Naive thymus-derived CD4-positive, alpha-beta T cell (primary cell): ENCODE measurements at regions of chr3 and their contacts with region 1.

Region 1: GRCh38 chr3:27484015-27484844 is at the start of gene SLC4A7:
- DNase-seq: peak; percentile 95 to 99 (median 97)
- ATAC-seq: peak; percentile 96
- H3K4me3 ChIP-seq: peak within 1 kb of the TSS; percentile 96
- H3K4me3 Mint-ChIP-seq: peak within 1 kb of the TSS; percentile 94 to 100 (median 99)
- H3K27ac ChIP-seq: peak within 1 kb of the TSS; percentile 90
- H3K27ac Mint-ChIP-seq: peak within 1 kb of the TSS; percentile 90 to 99 (median 95)
- H3K4me1 ChIP-seq: peaks cover 25 to 29% of the 10 kb centered on the region in 2 donors
- H3K4me1 Mint-ChIP-seq: peaks cover 35 to 42% (median 39%) of the 10 kb centered on the region in 7 donors
- H3K27me3 ChIP-seq: no peaks in the 10 kb centered on the region
- H3K27me3 Mint-ChIP-seq: no peaks in the 10 kb centered on the region
- total RNA-seq, gene SLC4A7: 34.9 to 69.1 (median 41.5) TPM

Region 2: DNA sequence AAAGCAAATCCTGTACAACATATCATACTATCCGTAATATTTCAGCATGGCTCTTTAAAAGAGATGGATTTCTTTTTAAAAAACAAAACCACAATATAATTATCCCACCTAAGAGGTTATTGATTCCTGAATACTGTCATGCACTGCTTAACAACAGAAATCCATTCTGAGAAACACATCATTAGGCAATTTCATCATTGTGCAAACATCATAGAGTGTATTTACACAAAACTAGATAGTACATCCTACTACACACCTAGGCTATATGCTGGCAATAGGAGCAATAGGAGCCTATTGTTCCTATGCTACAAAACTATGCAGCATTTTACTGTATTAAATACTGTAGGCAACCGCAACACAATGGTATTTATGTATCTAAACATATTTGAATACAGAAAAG is 357.0 kb before region 1 on chr3:
- CTCF ChIA-PET with region 1: no interaction called
- POLR2A ChIA-PET with region 1: no interaction called
- intact Hi-C with region 1: no loop called
- DNase-seq: no peak
- ATAC-seq: no peak
- H3K4me3 ChIP-seq: no peak overlapping the region
- H3K4me3 Mint-ChIP-seq: no peak overlapping the region
- H3K27ac ChIP-seq: no peak overlapping the region
- H3K27ac Mint-ChIP-seq: no peak overlapping the region
- H3K4me1 ChIP-seq: no peaks in the 10 kb centered on the region
- H3K4me1 Mint-ChIP-seq: no peaks in the 10 kb centered on the region
- H3K27me3 ChIP-seq: no peaks in the 10 kb centered on the region
- H3K27me3 Mint-ChIP-seq: peaks cover 0 to 5% (median 0%) of the 10 kb centered on the region in 5 donors

Region 3: DNA sequence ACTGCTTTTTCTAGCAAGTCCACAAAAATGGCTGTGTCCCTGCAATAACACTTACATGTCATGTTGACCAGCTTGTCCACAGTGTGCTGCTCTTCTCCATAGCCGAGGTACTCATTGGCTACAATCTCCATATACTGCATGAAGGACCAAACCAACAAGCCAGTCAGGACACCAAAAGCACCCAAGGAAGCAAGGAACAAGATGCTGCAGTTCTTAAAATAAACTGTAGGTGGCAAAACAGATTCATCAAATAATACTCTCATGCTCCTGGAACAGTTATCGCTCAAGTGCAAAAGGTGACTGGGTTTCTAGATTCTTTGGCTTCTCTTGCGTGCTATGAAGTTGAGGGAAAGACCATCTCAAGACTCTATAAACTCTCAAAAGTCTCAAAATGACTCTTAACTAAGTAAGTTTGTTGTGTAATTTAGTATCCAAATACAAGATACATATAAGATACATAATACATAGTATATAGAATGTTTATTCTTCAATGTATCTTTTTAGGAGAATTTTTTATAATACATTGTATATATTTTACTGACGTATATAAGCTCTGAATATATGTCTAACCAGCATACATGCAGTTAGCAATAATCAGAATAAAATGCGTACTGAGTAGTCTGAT is 172.1 kb before region 1 on chr3:
- CTCF ChIA-PET with region 1: interaction called, 4 read pairs
- POLR2A ChIA-PET with region 1: no interaction called
- intact Hi-C with region 1: loop called in 1 of 2 experiments (anchors 5 kb)
- DNase-seq: peak in 7 of 9 donors; percentile 18 to 61 (median 44)
- ATAC-seq: peak; percentile 70
- H3K4me3 ChIP-seq: no peak overlapping the region
- H3K4me3 Mint-ChIP-seq: no peak overlapping the region
- H3K27ac ChIP-seq: no peak overlapping the region
- H3K27ac Mint-ChIP-seq: no peak overlapping the region
- H3K4me1 ChIP-seq: no peaks in the 10 kb centered on the region
- H3K4me1 Mint-ChIP-seq: peaks cover 0 to 4% (median 0%) of the 10 kb centered on the region in 7 donors
- H3K27me3 ChIP-seq: no peaks in the 10 kb centered on the region
- H3K27me3 Mint-ChIP-seq: peaks cover 0 to 20% (median 8%) of the 10 kb centered on the region in 5 donors

Region 4: DNA sequence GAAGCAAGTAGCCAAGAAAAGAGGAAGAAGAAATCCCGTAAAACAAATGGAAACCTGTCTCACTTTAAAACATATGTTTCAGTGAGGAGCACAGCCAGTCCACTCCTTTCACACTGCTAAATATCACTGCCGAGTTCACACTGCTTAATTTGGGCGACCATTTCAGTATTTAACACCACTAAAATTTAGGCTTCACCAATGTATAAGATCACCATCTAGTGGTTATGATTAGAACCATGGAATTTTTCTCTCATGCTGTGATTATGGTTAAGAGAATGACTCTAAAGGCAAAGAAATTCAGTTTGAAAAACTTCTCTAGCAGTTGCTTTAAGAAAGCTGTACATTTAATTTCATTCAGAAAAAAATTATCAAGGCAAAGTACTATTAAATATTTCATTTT is 16.7 kb before region 1 on chr3:
- CTCF ChIA-PET with region 1: interaction called, 5 read pairs
- POLR2A ChIA-PET with region 1: interaction called, 6 read pairs
- intact Hi-C with region 1: loop called (anchors 1 kb)
- DNase-seq: peak in 7 of 9 donors; percentile 13 to 57 (median 38)
- ATAC-seq: peak; percentile 95
- H3K4me3 ChIP-seq: no peak overlapping the region
- H3K4me3 Mint-ChIP-seq: peak overlapping the region in 5 of 10 donors; percentile 4 to 42 (median 36)
- H3K27ac ChIP-seq: no peak overlapping the region
- H3K27ac Mint-ChIP-seq: peak overlapping the region in 5 of 9 donors; percentile 1 to 61 (median 26)
- H3K4me1 ChIP-seq: no peaks in the 10 kb centered on the region
- H3K4me1 Mint-ChIP-seq: peaks cover 6 to 38% (median 27%) of the 10 kb centered on the region in 7 donors
- H3K27me3 ChIP-seq: no peaks in the 10 kb centered on the region
- H3K27me3 Mint-ChIP-seq: no peaks in the 10 kb centered on the region

Region 5: DNA sequence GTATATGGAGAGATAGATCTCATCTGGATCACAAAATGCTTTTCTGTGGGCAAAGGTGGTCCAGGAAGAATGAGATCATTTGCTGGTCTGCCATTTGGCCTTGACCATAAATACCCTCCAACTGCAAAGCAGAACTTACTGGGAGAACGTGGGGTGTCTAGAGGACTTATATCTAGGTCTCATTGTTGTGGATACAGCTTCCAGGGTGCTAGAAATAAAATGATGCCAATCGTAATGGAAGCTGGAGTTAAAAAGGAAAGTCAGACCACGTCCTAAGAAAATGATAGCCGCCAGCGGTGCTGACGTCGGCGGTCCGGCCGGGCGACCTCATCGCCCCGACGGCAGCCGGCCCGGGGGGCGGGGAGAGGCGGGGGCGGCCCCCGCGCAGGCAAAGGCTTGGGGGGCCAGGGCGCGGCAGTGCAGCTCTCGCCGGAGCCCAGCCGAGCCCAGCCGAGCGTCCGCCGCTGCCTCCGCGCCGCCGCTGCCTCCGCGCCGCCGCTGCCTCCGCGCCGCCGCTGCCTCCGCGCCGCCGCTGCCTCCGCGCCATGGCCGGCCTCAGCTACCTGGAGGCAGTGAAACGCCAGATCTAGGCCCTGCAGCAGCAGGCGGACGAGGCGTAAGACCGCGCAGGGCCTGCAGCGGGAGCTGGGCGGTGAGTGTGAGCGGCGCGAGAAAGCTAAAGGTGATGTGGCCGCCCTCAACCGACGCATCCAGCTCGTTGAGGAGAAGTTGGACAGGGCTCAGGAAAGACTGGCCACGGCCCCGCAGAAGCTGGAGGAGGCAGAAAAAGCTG is 148.4 kb after region 1 on chr3:
- CTCF ChIA-PET with region 1: interaction called, 8 read pairs
- POLR2A ChIA-PET with region 1: interaction called, 8 read pairs
- intact Hi-C with region 1: loop called (anchors 1 to 2 kb)
- DNase-seq: peak; percentile 21 to 56 (median 44)
- ATAC-seq: peak; percentile 92
- H3K4me3 ChIP-seq: peak overlapping the region; percentile 77
- H3K4me3 Mint-ChIP-seq: peak overlapping the region; percentile 92 to 99 (median 95)
- H3K27ac ChIP-seq: peak overlapping the region; percentile 70
- H3K27ac Mint-ChIP-seq: peak overlapping the region; percentile 88 to 99 (median 93)
- H3K4me1 ChIP-seq: peaks cover 0 to 18% of the 10 kb centered on the region in 2 donors
- H3K4me1 Mint-ChIP-seq: peaks cover 11 to 31% (median 29%) of the 10 kb centered on the region in 7 donors
- H3K27me3 ChIP-seq: no peaks in the 10 kb centered on the region
- H3K27me3 Mint-ChIP-seq: no peaks in the 10 kb centered on the region

Region 6: DNA sequence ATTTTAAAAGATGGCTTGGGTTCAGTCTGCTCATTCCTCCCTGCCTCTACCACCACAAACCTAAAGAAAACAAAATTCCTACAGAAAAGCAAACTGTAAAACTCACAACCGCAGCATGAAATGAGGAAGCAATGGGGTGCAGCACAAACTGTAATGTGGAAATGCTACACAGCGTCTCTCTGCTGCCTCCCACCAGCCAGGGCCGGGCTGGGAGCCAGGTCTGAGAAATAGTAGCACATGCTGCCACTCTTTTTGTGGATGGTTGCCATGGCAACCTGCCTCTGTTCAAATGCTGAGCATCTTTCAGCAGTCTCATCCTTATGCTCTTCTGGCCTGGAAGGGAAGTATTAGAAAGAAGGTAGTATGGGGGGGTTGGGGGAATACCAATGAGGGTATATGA is 182.5 kb after region 1 on chr3:
- CTCF ChIA-PET with region 1: no interaction called
- POLR2A ChIA-PET with region 1: no interaction called
- intact Hi-C with region 1: loop called in 1 of 2 experiments (anchors 5 kb)
- DNase-seq: peak in 1 of 9 donors; percentile 12
- ATAC-seq: peak; percentile 78
- H3K4me3 ChIP-seq: no peak overlapping the region
- H3K4me3 Mint-ChIP-seq: peak overlapping the region in 1 of 10 donors; percentile 56
- H3K27ac ChIP-seq: no peak overlapping the region
- H3K27ac Mint-ChIP-seq: peak overlapping the region in 4 of 9 donors; percentile 22 to 85 (median 54)
- H3K4me1 ChIP-seq: no peaks in the 10 kb centered on the region
- H3K4me1 Mint-ChIP-seq: peaks cover 2 to 34% (median 9%) of the 10 kb centered on the region in 7 donors
- H3K27me3 ChIP-seq: no peaks in the 10 kb centered on the region
- H3K27me3 Mint-ChIP-seq: no peaks in the 10 kb centered on the region

Region 7: GRCh38 chr3:27880969-27881892 is 397.0 kb after region 1 on chr3:
- CTCF ChIA-PET with region 1: no interaction called
- POLR2A ChIA-PET with region 1: interaction called, 4 read pairs
- intact Hi-C with region 1: loop called (anchors 5 to 10 kb)
- DNase-seq: peak in 8 of 9 donors; percentile 24 to 75 (median 62)
- ATAC-seq: peak; percentile 87
- H3K4me3 ChIP-seq: peak overlapping the region; percentile 43
- H3K4me3 Mint-ChIP-seq: peak overlapping the region; percentile 82 to 94 (median 89)
- H3K27ac ChIP-seq: peak overlapping the region; percentile 75
- H3K27ac Mint-ChIP-seq: peak overlapping the region; percentile 91 to 99 (median 97)
- H3K4me1 ChIP-seq: peaks cover 28 to 47% of the 10 kb centered on the region in 2 donors
- H3K4me1 Mint-ChIP-seq: peaks cover 39 to 85% (median 73%) of the 10 kb centered on the region in 7 donors
- H3K27me3 ChIP-seq: no peaks in the 10 kb centered on the region
- H3K27me3 Mint-ChIP-seq: peaks cover 0 to 4% (median 0%) of the 10 kb centered on the region in 5 donors